ENCODE measurements at regions of chr16 and their contacts with region 1.

Region 1: GRCh38 chr16:77971306-77972271 is 50.8 kb upstream of the CLEC3A start:
- DNase-seq: peak; percentile 72
- H3K4me3 ChIP-seq: no peak overlapping the region
- H3K27ac ChIP-seq: no peak overlapping the region
- H3K4me1 ChIP-seq: peaks cover 0 to 11% of the 10 kb centered on the region in 2 experiments; a peak in 2 of 4 replicates
- H3K27me3 ChIP-seq: no peaks in the 10 kb centered on the region
- CTCF ChIP-seq: peak; percentile 92
- EP300 ChIP-seq: no peak
- RAD21 ChIP-seq: peak; percentile 96

Region 2: GRCh38 chr16:77675464-77676324 is 295.9 kb before region 1 on chr16:
- CTCF ChIA-PET with region 1: interaction called, 84 read pairs
- POLR2A ChIA-PET with region 1: no interaction called
- DNase-seq: peak; percentile 79
- H3K4me3 ChIP-seq: peak overlapping the region in 1 of 2 experiments; percentile 27; a peak in 2 of 4 replicates
- H3K27ac ChIP-seq: no peak overlapping the region
- H3K4me1 ChIP-seq: no peaks in the 10 kb centered on the region
- H3K27me3 ChIP-seq: no peaks in the 10 kb centered on the region
- CTCF ChIP-seq: peak; percentile 95
- EP300 ChIP-seq: no peak
- RAD21 ChIP-seq: peak; percentile 99

Region 3: DNA sequence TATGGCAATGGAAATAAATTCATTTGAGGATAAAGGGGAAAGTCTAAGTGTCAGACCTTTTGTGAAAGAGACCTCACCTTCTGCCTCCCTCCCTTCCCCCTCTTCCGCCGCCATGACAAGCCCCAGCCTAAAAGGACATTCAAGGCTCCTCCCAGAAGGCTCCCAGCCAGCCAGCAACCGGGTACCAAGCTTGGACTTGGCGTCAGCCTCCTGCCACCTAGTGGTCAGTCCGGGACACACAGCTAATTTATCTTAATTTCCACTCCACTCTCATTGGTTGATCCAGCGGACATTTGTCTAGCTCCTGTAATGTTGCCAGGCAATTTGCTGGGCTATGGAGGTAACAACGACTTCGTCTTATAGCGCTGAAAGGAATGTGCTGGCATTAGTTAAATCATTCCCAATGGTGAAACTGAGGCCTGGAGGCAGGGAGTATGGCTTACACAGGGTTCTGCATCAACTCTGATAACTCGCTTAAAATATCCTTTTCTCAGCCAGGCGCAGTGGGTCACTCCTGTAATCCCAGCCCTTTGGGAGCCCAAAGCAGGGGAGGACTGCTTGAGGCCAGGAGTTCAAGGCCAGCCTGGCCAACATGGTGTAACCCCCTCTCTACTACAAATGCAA is 31.4 kb after region 1 on chr16:
- CTCF ChIA-PET with region 1: interaction called, 28 read pairs
- POLR2A ChIA-PET with region 1: no interaction called
- DNase-seq: peak; percentile 85
- H3K4me3 ChIP-seq: peak overlapping the region in 1 of 2 experiments; percentile 14; a peak in 1 of 4 replicates
- H3K27ac ChIP-seq: no peak overlapping the region
- H3K4me1 ChIP-seq: no peaks in the 10 kb centered on the region; a peak in 1 of 4 replicates
- H3K27me3 ChIP-seq: no peaks in the 10 kb centered on the region
- CTCF ChIP-seq: peak; percentile 92
- EP300 ChIP-seq: peak in 1 of 2 experiments; percentile 44; a peak in 1 of 4 replicates
- RAD21 ChIP-seq: peak; percentile 86